Heart right ventricle (tissue), 16 donors: ENCODE measurements at regions of chr11 and their contacts with region 1.

Region 1: GRCh38 chr11:34890812-34891211 is 25.4 kb downstream of the APIP start:
- DNase-seq: no peak
- ATAC-seq: peak in 2 of 8 donors; percentile 28 to 55
- H3K4me3 ChIP-seq: no peak overlapping the region
- H3K27ac ChIP-seq: no peak overlapping the region
- H3K4me1 ChIP-seq: no peaks in the 10 kb centered on the region
- H3K27me3 ChIP-seq: no peaks in the 10 kb centered on the region
- CTCF ChIP-seq: peak; percentile 10 to 66 (median 51)

Region 2: GRCh38 chr11:34512840-34513681 is 377.8 kb before region 1 on chr11:
- intact Hi-C with region 1: loop called in 1 of 10 experiments (anchors 10 kb)
- DNase-seq: peak; percentile 21 to 31
- ATAC-seq: peak in 6 of 8 donors; percentile 62 to 85 (median 69)
- H3K4me3 ChIP-seq: no peak overlapping the region
- H3K27ac ChIP-seq: no peak overlapping the region
- H3K4me1 ChIP-seq: peaks cover 0 to 12% (median 0%) of the 10 kb centered on the region in 9 donors
- H3K27me3 ChIP-seq: peaks cover 0 to 5% (median 0%) of the 10 kb centered on the region in 7 donors
- CTCF ChIP-seq: peak; percentile 5 to 74 (median 58)

Region 3: DNA sequence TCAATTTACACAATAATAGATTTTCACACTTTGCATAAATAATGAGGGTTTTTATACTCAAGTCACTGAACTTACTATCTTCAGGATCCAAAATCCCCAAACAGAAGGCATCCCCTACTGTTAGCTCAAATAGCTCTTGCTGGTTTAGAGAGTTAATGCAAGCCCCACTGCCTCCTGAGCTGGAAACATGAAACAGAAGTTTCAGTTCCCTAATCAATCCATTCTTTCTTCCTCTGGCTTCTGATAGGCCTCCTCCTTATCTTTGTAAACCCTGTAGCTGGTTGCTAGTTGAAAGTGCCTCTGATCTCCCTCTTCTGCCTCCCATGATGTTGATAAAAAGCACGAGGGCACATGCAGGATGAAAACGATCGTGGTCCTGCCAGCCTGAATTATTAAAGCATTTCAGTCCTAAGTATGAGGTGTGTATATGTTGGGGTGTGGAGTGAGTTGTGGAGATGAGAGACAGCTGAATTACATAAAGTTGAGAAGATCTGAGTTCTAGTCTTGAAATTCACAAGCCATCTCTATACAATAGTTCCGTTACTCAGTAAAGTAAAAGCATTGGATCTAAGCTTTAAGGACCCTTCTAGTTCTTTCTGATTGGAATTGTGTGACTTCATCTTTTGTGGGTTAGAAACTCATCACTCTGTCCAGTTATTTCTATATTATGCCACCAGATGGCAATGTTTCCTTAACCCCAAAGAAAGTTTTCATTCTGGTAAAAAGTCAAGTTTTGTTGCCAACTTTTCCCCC is 304.9 kb before region 1 on chr11:
- intact Hi-C with region 1: loop called (anchors 1 to 5 kb)
- DNase-seq: no peak
- ATAC-seq: peak in 5 of 8 donors; percentile 13 to 51 (median 28)
- H3K4me3 ChIP-seq: peak overlapping the region in 4 of 10 donors; percentile 24 to 32 (median 24)
- H3K27ac ChIP-seq: no peak overlapping the region
- H3K4me1 ChIP-seq: peaks cover 0 to 13% (median 6%) of the 10 kb centered on the region in 9 donors
- H3K27me3 ChIP-seq: peaks cover 0 to 7% (median 2%) of the 10 kb centered on the region in 7 donors
- CTCF ChIP-seq: peak; percentile 49 to 78 (median 71)

Region 4: GRCh38 chr11:34599406-34599901 is 291.4 kb before region 1 on chr11:
- intact Hi-C with region 1: loop called in 1 of 10 experiments (anchors 5 kb)
- DNase-seq: no peak
- ATAC-seq: no peak
- H3K4me3 ChIP-seq: no peak overlapping the region
- H3K27ac ChIP-seq: no peak overlapping the region
- H3K4me1 ChIP-seq: peaks cover 0 to 23% (median 17%) of the 10 kb centered on the region in 9 donors
- H3K27me3 ChIP-seq: no peaks in the 10 kb centered on the region
- CTCF ChIP-seq: no peak